ENCODE measurements at regions of chr6 and their contacts with region 1.

Region 1: GRCh38 chr6:110873981-110874879 is at the start of gene AMD1:
- DNase-seq: peak; percentile 98
- ATAC-seq: peak; percentile 77
- H3K4me3 ChIP-seq: peak within 1 kb of the TSS; percentile 78 to 96 (median 93)
- H3K4me3 Mint-ChIP-seq: peak within 1 kb of the TSS; percentile 100
- H3K27ac ChIP-seq: peak within 1 kb of the TSS; percentile 80 to 88
- H3K27ac Mint-ChIP-seq: peak within 1 kb of the TSS; percentile 100
- H3K4me1 ChIP-seq: peaks cover 30 to 34% of the 10 kb centered on the region in 2 donors
- H3K4me1 Mint-ChIP-seq: peaks cover 40% of the 10 kb centered on the region
- H3K27me3 ChIP-seq: no peaks in the 10 kb centered on the region
- H3K27me3 Mint-ChIP-seq: no peaks in the 10 kb centered on the region
- CTCF ChIP-seq: no peak
- total RNA-seq, gene AMD1: 49.3 and 49.8 TPM in 2 replicates

Region 2: DNA sequence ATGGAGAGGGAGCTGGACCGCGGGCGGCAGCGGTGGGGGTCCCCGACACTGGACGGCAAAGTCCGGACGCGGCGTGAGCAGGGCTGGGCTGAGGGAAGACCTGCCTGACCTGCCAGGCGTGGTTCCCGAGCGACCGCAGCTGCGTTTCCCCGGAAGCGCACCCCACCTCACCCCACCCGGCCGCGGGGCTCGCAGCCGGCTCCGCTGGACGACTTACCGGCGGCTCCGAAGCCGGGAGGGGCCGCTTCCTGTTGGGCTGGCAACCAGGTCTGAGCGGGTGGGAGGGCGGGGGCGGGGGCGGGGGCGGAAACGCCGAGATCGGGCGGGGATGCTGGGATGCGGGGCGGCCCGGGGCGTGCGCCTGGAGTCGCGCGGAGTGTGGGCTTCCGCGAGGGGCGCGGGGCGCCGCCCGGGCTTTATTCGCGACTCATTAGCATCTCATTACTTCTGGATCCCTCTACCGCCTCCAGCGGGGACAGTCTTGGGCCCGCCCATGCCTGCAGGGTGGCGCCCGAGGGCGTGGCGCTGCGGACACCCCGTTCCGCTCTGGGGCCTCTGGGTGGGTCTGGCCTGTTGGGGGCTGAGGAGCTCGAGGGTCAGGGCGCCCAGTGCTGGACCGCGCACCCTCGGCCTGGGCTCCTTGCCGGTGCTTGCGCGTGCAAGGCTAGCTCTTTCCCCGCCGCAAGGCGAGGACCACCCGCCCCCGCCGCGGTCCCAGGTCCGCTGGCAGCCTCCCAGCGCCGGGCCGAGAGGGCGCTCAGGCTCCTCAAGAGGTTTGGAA is 1418.5 kb before region 1 on chr6 and contains the start of gene MICAL1:
- CTCF ChIA-PET with region 1: interaction called, 3 read pairs
- POLR2A ChIA-PET with region 1: no interaction called
- intact Hi-C with region 1: loop called (anchors 10 kb)
- DNase-seq: peak; percentile 94
- ATAC-seq: peak; percentile 61
- H3K4me3 ChIP-seq: peak within 1 kb of the TSS; percentile 73 to 99 (median 93)
- H3K4me3 Mint-ChIP-seq: peak within 1 kb of the TSS; percentile 95
- H3K27ac ChIP-seq: peak within 1 kb of the TSS; percentile 98 to 99
- H3K27ac Mint-ChIP-seq: peak within 1 kb of the TSS; percentile 99
- H3K4me1 ChIP-seq: peaks cover 82 to 83% of the 10 kb centered on the region in 2 donors
- H3K4me1 Mint-ChIP-seq: peaks cover 82% of the 10 kb centered on the region
- H3K27me3 ChIP-seq: no peaks in the 10 kb centered on the region
- H3K27me3 Mint-ChIP-seq: no peaks in the 10 kb centered on the region
- CTCF ChIP-seq: peak; percentile 53
- total RNA-seq, gene MICAL1: 202 TPM in 2 replicates

Region 3: GRCh38 chr6:110528101-110528929 is 345.9 kb before region 1 on chr6:
- CTCF ChIA-PET with region 1: interaction called, 5 read pairs
- POLR2A ChIA-PET with region 1: no interaction called
- intact Hi-C with region 1: loop called (anchors 1 kb)
- DNase-seq: peak; percentile 74
- ATAC-seq: peak; percentile 47
- H3K4me3 ChIP-seq: no peak overlapping the region
- H3K4me3 Mint-ChIP-seq: no peak overlapping the region
- H3K27ac ChIP-seq: no peak overlapping the region
- H3K27ac Mint-ChIP-seq: no peak overlapping the region
- H3K4me1 ChIP-seq: no peaks in the 10 kb centered on the region
- H3K4me1 Mint-ChIP-seq: no peaks in the 10 kb centered on the region
- H3K27me3 ChIP-seq: peaks cover 0 to 8% (median 0%) of the 10 kb centered on the region in 4 experiments
- H3K27me3 Mint-ChIP-seq: peaks cover 6% of the 10 kb centered on the region
- CTCF ChIP-seq: peak; percentile 91

Region 4: GRCh38 chr6:110826236-110827129 is 47.7 kb before region 1 on chr6:
- CTCF ChIA-PET with region 1: interaction called, 5 read pairs
- POLR2A ChIA-PET with region 1: interaction called, 14 read pairs
- intact Hi-C with region 1: no loop called
- DNase-seq: peak; percentile 35
- ATAC-seq: no peak
- H3K4me3 ChIP-seq: peak overlapping the region in 1 of 5 experiments; percentile 30
- H3K4me3 Mint-ChIP-seq: peak overlapping the region; percentile 26
- H3K27ac ChIP-seq: no peak overlapping the region
- H3K27ac Mint-ChIP-seq: peak overlapping the region; percentile 20
- H3K4me1 ChIP-seq: peaks cover 4% of the 10 kb centered on the region in 2 donors
- H3K4me1 Mint-ChIP-seq: peaks cover 10% of the 10 kb centered on the region
- H3K27me3 ChIP-seq: no peaks in the 10 kb centered on the region
- H3K27me3 Mint-ChIP-seq: no peaks in the 10 kb centered on the region
- CTCF ChIP-seq: no peak

Region 5: GRCh38 chr6:110849781-110850180 is 24.4 kb before region 1 on chr6:
- CTCF ChIA-PET with region 1: no interaction called
- POLR2A ChIA-PET with region 1: no interaction called
- intact Hi-C with region 1: no loop called
- DNase-seq: no peak
- ATAC-seq: no peak
- H3K4me3 ChIP-seq: no peak overlapping the region
- H3K4me3 Mint-ChIP-seq: no peak overlapping the region
- H3K27ac ChIP-seq: no peak overlapping the region
- H3K27ac Mint-ChIP-seq: no peak overlapping the region
- H3K4me1 ChIP-seq: no peaks in the 10 kb centered on the region
- H3K4me1 Mint-ChIP-seq: no peaks in the 10 kb centered on the region
- H3K27me3 ChIP-seq: no peaks in the 10 kb centered on the region
- H3K27me3 Mint-ChIP-seq: no peaks in the 10 kb centered on the region
- CTCF ChIP-seq: no peak

Region 6: DNA sequence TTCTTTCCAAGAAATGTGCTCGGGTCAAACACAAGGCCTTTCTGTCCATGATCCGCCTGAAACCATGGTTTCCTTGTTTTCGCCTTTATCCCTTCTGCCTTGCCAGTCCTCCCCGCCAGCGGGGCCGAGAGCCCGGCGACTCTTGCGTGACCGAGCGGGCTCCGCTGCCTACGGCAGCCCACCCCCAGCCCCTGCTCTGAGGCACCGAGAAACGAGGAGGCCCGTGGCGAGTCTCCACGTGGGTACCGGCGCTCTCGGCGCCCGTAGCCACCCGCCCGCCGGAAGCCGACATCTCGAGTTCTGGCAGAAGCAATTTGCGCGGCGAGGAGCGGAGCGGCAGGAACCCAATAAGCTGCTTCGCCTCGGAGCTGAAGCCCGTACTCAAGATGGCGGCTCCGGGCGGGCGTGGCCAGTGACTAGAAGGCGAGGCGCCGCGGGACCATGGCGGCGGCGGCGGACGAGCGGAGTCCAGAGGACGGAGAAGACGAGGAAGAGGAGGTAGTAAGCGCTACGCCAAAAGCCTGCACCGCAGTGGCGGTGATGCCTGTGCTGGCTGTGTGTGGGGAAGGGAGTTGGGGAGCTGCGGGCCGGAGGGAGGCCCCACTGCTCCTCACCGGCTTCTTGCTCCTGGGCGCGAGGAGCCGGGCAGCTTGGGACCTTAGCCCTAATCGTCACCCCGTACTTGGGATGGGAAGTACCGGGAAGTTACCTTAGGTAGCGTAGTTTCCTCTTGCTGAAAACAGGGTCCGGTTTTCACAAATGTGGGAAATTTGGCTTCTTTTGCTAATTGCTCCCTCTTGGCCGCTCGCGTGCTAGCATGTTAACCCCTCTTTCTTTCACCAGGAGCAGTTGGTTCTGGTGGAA is 84.3 kb after region 1 on chr6 and contains the start of gene GTF3C6:
- CTCF ChIA-PET with region 1: interaction called, 7 read pairs
- POLR2A ChIA-PET with region 1: interaction called, 15 read pairs
- intact Hi-C with region 1: loop called (anchors 1 kb)
- DNase-seq: peak; percentile 94
- ATAC-seq: peak; percentile 99
- H3K4me3 ChIP-seq: peak within 1 kb of the TSS; percentile 65 to 96 (median 93)
- H3K4me3 Mint-ChIP-seq: peak within 1 kb of the TSS; percentile 98
- H3K27ac ChIP-seq: peak within 1 kb of the TSS; percentile 88 to 94
- H3K27ac Mint-ChIP-seq: peak within 1 kb of the TSS; percentile 98
- H3K4me1 ChIP-seq: peaks cover 8 to 16% of the 10 kb centered on the region in 2 donors
- H3K4me1 Mint-ChIP-seq: peaks cover 17% of the 10 kb centered on the region
- H3K27me3 ChIP-seq: no peaks in the 10 kb centered on the region
- H3K27me3 Mint-ChIP-seq: peaks cover 4% of the 10 kb centered on the region
- CTCF ChIP-seq: no peak
- total RNA-seq, gene GTF3C6: 34.7 and 36.4 TPM in 2 replicates

Region 7: GRCh38 chr6:111259089-111259831 is 385.0 kb after region 1 on chr6:
- CTCF ChIA-PET with region 1: no interaction called
- POLR2A ChIA-PET with region 1: no interaction called
- intact Hi-C with region 1: loop called (anchors 2 kb)
- DNase-seq: peak; percentile 100
- ATAC-seq: peak; percentile 96
- H3K4me3 ChIP-seq: peak overlapping the region; percentile 63 to 91 (median 82)
- H3K4me3 Mint-ChIP-seq: peak overlapping the region; percentile 87
- H3K27ac ChIP-seq: peak overlapping the region; percentile 95
- H3K27ac Mint-ChIP-seq: peak overlapping the region; percentile 98
- H3K4me1 ChIP-seq: peaks cover 17 to 26% of the 10 kb centered on the region in 2 donors
- H3K4me1 Mint-ChIP-seq: peaks cover 25% of the 10 kb centered on the region
- H3K27me3 ChIP-seq: no peaks in the 10 kb centered on the region
- H3K27me3 Mint-ChIP-seq: peaks cover under 1% of the 10 kb centered on the region
- CTCF ChIP-seq: peak; percentile 96

Measured in B cell (primary cell).